Activated naive CD4-positive, alpha-beta T cell treated with anti-CD3 and anti-CD28 coated beads for 36 hours (primary cell): ENCODE measurements at regions of chr3 and their contacts with region 1.

Region 1: DNA sequence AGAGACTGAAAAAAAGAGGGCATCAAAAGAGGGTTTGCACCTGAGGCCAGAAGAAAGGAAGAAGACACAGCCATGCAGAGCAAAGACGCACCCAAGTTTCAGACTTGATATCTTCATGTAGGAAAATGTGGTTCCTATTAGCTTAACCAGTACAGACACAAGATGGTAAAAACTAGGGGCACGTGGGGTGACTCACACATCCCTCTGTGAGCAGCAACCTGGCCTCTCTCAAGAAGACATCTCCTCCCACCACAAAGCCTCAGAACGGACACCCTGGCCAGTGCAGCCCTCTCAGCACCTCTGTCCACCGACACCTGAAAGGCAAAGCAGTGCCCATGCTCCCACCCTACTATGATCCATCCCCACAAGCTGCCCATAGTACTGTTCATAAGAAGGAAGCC is 33.3 kb downstream of the GLB1 start:
- DNase-seq: peak; percentile 86
- H3K4me3 Mint-ChIP-seq: no peak overlapping the region
- H3K27ac Mint-ChIP-seq: peak overlapping the region; percentile 93
- H3K4me1 Mint-ChIP-seq: peaks cover 57% of the 10 kb centered on the region
- H3K27me3 Mint-ChIP-seq: no peaks in the 10 kb centered on the region

Region 2: DNA sequence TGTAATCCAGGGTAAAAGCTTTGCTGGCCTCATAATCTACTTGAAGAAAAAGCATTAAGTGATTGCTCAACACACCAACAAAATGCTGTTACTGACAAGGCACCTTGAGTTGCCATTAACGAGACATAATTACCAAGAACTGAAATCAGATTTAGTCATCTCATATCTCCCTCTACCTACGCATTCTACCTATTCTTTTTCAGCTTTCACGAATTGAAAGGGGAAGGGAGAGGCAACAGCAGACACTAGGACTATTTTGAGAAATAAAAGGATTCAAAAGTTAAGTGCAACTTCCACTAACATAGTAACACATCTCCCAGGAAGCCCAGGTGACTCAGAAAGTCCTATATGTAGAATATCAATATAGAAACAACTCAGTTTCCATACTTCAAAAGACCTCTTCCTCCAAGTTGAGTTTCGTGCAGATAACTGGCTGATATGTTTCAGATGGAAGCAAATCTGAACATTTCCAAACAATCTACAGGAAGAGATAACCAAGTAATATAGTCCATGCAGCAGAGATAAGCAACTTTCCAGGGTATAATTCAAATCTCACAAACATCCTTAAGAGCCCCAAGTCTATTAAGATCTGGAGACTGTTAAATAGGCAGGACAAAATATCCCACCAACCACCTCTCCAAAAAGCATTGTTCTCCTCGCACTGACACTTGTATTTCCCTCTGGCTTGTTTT is 1084.5 kb before region 1 on chr3:
- CTCF ChIA-PET with region 1: no interaction called
- intact Hi-C with region 1: loop called (anchors 5 kb)
- DNase-seq: peak; percentile 37
- H3K4me3 Mint-ChIP-seq: peak overlapping the region; percentile 78
- H3K27ac Mint-ChIP-seq: peak overlapping the region; percentile 43
- H3K4me1 Mint-ChIP-seq: peaks cover 26% of the 10 kb centered on the region
- H3K27me3 Mint-ChIP-seq: peaks cover 49% of the 10 kb centered on the region

Region 3: DNA sequence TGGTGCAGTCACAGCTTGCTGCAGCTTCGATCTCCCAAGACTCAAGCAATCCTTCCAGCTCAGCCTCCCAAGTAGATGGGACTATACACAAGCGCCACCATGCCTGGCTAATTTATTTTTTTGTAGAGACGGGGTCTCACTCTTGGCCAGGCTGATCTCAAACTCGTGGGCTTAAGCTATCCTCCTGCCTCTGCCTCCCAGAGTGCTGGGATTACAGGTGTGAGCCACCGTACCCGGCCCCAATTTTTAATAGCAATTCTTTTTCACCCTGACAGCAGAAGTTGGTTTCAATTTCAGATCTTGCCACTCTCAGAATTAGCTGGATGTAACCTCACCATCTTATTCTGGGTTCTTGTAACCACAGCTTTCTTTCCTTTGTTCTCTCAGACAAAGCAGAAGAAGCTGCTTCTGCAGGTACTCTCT is 181.0 kb before region 1 on chr3:
- CTCF ChIA-PET with region 1: no interaction called
- intact Hi-C with region 1: loop called (anchors 2 kb)
- DNase-seq: peak; percentile 30
- H3K4me3 Mint-ChIP-seq: no peak overlapping the region
- H3K27ac Mint-ChIP-seq: no peak overlapping the region
- H3K4me1 Mint-ChIP-seq: peaks cover 12% of the 10 kb centered on the region
- H3K27me3 Mint-ChIP-seq: peaks cover 15% of the 10 kb centered on the region

Region 4: GRCh38 chr3:32992322-32992692 is 71.3 kb before region 1 on chr3:
- CTCF ChIA-PET with region 1: interaction called, 3 read pairs
- intact Hi-C with region 1: loop called (anchors 1 kb)
- DNase-seq: no peak
- H3K4me3 Mint-ChIP-seq: peak overlapping the region; percentile 31
- H3K27ac Mint-ChIP-seq: peak overlapping the region; percentile 84
- H3K4me1 Mint-ChIP-seq: peaks cover 54% of the 10 kb centered on the region
- H3K27me3 Mint-ChIP-seq: peaks cover 2% of the 10 kb centered on the region

Region 5: GRCh38 chr3:33047842-33048834 is 15.5 kb before region 1 on chr3:
- CTCF ChIA-PET with region 1: interaction called, 39 read pairs
- intact Hi-C with region 1: loop called (anchors 1 kb)
- DNase-seq: peak; percentile 78
- H3K4me3 Mint-ChIP-seq: no peak overlapping the region
- H3K27ac Mint-ChIP-seq: peak overlapping the region; percentile 89
- H3K4me1 Mint-ChIP-seq: peaks cover 62% of the 10 kb centered on the region
- H3K27me3 Mint-ChIP-seq: no peaks in the 10 kb centered on the region

Region 6: GRCh38 chr3:33113772-33114621 is 50.3 kb after region 1 on chr3 and contains the start of gene CRTAP:
- CTCF ChIA-PET with region 1: interaction called, 6 read pairs
- intact Hi-C with region 1: loop called (anchors 1 kb)
- DNase-seq: peak; percentile 86
- H3K4me3 Mint-ChIP-seq: peak within 1 kb of the TSS; percentile 78
- H3K27ac Mint-ChIP-seq: no peak within 1 kb of the TSS
- H3K4me1 Mint-ChIP-seq: peaks cover 36% of the 10 kb centered on the region
- H3K27me3 Mint-ChIP-seq: no peaks in the 10 kb centered on the region
- total RNA-seq, gene CRTAP: 48.1 to 51.1 TPM